Activated CD4-positive, alpha-beta T cell treated with anti-CD3 and anti-CD28 coated beads for 36 hours (primary cell): ENCODE measurements at regions of chr7 and their contacts with region 1.

Region 1: GRCh38 chr7:1961701-1962276 is 271.0 kb downstream of the MAD1L1 start:
- DNase-seq: peak; percentile 75
- ATAC-seq: peak; percentile 78
- H3K4me3 Mint-ChIP-seq: peak overlapping the region; percentile 55
- H3K27ac Mint-ChIP-seq: peak overlapping the region; percentile 82
- H3K4me1 Mint-ChIP-seq: peaks cover 17% of the 10 kb centered on the region
- H3K27me3 Mint-ChIP-seq: no peaks in the 10 kb centered on the region

Region 2: DNA sequence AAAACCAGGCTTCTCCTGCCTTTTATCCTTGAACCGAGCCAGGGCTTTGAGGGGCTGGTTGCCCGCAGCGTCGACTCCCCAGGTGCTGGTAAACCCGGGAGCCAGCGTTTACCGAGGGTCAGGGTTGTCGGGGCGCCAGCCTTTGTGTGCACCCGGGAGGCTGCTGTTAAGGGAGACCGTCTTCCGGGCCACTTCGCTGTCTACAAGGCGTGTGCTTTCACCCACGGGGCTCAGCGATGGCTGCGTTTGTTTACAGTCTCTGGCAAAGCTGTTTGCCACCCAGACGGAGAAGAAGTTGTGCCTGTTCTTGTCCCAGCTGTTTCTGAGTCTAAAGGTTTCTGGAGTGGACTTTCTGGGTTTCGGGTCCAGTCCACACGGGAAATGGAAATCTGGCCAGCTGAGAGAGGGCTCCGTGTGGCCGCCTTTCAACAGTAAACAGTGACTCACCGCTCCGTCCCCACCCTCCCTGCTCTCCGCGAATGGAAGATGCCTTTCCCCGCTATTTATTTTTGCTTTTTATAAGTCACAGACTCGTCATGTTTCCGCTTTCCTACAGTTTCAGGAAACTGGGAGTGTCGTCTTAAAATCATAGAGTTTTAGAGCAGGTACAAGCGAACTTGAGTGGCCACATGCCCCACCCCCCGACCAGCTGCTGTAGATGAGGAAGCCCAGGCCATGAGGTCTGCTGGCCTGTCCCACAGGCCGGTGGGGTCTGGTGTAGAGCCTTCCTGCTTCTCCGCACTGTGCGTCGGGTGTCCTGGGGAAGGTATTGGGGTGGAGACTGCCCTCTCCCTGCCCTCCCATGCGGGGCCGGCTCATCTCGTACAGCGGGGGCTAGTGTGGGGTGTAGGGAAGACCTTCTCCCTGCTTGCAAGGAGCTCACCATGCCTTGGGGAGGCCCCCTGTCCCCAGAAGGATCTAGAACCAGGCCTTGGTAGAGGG is 429.0 kb before region 1 on chr7:
- CTCF ChIA-PET with region 1: no interaction called
- POLR2A ChIA-PET with region 1: no interaction called
- intact Hi-C with region 1: no loop called
- DNase-seq: peak; percentile 78
- ATAC-seq: peak; percentile 65
- H3K4me3 Mint-ChIP-seq: peak overlapping the region; percentile 89
- H3K27ac Mint-ChIP-seq: peak overlapping the region; percentile 89
- H3K4me1 Mint-ChIP-seq: peaks cover 27% of the 10 kb centered on the region
- H3K27me3 Mint-ChIP-seq: no peaks in the 10 kb centered on the region

Region 3: DNA sequence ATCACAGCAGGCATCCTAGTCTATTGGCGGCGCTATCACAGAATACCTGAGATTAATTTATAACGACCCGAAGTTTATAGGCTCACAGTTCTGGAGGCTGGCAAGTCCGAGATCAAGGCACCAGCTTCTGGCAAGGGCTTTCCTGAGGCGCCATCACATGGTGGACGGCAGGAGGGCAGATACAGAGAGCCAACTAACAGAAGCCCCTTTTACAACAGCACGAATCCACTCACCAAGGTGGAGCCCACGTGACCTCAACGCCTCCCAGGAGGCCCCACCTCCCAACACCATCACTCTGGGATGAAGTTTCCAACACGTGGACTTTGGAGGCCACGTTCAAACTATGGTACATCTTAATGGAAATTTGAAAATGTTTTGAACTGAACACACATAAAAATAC is 36.4 kb before region 1 on chr7:
- CTCF ChIA-PET with region 1: no interaction called
- POLR2A ChIA-PET with region 1: no interaction called
- intact Hi-C with region 1: loop called (anchors 1 to 5 kb)
- DNase-seq: peak; percentile 45
- ATAC-seq: no peak
- H3K4me3 Mint-ChIP-seq: peak overlapping the region; percentile 10
- H3K27ac Mint-ChIP-seq: no peak overlapping the region
- H3K4me1 Mint-ChIP-seq: peaks cover 86% of the 10 kb centered on the region
- H3K27me3 Mint-ChIP-seq: peaks cover 21% of the 10 kb centered on the region